ENCODE measurements at regions of chr3 and their contacts with region 1.

Region 1: DNA sequence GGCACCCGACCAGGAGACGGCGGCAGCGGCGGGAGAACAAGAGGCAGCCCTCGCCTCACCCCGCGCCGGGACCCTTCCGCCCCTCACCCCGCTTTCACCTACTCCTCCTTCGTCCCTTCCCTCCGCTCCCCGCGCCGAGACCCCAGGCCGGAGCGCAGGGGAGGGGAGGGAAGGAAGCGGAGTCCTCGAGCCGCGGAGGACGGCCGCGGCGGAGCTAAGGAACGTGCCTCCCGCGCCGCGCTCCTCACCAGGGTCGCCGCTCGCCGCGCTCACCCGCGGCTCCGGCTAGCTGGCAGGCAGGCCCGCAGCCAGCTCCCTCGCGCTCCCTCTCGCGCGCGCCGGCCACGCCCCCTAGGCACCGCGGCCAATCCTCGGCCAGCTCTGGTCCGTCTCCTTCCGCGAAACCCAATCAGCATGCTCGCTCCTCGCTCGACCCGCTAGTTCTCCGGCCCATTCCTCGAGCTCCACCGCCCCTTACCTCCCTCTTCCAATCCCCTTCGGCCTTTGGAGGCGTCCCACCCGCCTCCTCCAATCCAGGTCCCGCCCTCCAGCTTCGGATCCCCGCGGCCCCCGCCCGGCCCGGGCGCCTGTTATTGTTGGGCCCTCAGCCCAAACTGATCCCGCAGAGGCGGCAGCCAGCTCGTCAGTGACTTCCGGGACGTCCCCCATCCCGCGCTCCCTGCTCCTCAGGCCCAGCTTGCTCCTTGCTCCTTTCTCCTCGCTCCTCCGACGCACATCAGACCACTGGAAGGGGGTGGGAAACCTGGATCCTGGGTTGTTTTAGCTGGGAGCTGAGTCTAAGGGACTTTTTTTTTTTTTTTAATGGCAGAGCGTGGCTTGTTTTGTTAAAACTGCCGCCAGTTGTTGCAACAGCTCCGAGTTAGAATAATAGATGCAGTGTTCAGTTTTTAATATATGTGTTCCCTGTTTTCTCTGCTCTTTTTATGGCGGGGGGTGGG is at the start of gene DCBLD2:
- DNase-seq: peak; percentile 99
- H3K4me3 ChIP-seq: peak within 1 kb of the TSS; percentile 77 to 93 (median 92)
- H3K27ac ChIP-seq: peak within 1 kb of the TSS; percentile 88
- H3K4me1 ChIP-seq: peaks cover 41% of the 10 kb centered on the region
- H3K27me3 ChIP-seq: no peaks in the 10 kb centered on the region
- CTCF ChIP-seq: no peak
- POLR2A ChIP-seq: peak; percentile 97
- total RNA-seq, gene DCBLD2: 62.6 and 77.3 TPM in 2 replicates

Region 2: DNA sequence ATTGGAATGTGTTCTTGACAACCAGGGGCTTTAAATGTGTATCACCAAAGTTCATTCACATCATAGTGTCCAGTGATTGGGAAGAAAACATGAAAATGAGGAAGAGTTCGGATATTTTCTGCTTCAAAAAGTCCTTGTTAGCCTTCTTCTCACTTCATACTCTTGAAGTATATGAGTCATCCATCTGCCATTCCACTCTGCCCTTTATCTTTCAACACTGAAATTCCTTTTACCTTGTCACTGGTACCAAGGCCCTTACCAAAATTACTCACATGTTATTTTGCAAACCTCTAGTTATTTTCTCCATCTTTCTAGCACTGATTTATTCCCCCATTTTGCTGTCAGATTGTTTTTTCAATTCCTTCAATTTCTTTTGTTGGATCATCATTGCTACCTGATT is 702.7 kb before region 1 on chr3:
- CTCF ChIA-PET with region 1: no interaction called
- POLR2A ChIA-PET with region 1: no interaction called
- dilution Hi-C with region 1: no loop called
- intact Hi-C with region 1: no loop called
- DNase-seq: no peak
- H3K4me3 ChIP-seq: no peak overlapping the region
- H3K27ac ChIP-seq: no peak overlapping the region
- H3K4me1 ChIP-seq: no peaks in the 10 kb centered on the region
- H3K27me3 ChIP-seq: no peaks in the 10 kb centered on the region
- CTCF ChIP-seq: no peak
- POLR2A ChIP-seq: no peak

Region 3: DNA sequence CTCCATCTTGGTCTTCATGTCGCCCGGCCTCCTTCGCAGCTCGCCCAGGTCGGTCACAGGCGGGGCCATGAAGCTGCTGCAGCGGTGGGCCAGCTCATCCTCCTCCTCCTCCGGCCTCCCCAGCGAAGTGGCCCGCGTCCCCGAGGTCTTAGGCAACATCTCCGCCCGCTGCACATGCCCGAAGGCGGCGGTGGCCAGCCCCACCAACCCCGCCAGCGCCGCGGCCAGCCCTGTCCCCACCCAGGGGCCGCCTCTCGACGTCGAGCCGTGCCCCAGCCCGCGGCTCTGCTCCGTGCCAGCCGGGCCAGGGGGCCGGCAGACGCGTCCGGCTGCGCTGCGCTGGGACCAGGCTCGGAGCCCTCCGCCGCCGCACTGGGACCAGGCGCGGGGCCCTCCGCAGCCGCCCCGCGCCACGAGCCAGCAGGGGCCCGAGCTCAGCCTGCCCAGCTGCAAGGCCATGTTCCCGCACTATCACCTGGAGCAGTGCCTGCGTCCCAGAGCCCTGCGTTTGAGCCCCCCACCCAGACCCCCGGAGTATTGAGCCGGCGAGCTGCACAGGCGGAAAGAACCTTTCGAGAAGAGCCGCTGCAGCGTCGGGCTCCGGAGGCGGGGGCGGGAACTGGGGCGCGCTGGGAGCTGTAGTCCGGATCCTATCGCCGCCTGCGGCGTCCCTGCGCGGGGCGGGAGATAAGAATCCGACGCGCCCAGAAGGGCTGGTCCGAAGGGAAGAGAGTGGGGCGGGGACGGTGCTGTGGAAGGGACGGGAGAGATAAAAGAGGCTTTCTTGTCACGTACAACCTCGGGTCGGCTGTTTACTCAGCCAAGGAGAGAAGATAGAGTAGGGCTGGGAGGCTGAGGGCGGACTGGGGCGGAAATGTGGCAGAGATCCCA is 308.4 kb before region 1 on chr3 and contains the start of gene CPOX:
- CTCF ChIA-PET with region 1: interaction called, 3 read pairs
- POLR2A ChIA-PET with region 1: no interaction called
- dilution Hi-C with region 1: no loop called
- intact Hi-C with region 1: loop called (anchors 10 kb)
- DNase-seq: peak; percentile 89
- H3K4me3 ChIP-seq: peak within 1 kb of the TSS; percentile 52 to 94 (median 76)
- H3K27ac ChIP-seq: peak within 1 kb of the TSS; percentile 49
- H3K4me1 ChIP-seq: peaks cover 10% of the 10 kb centered on the region
- H3K27me3 ChIP-seq: no peaks in the 10 kb centered on the region
- CTCF ChIP-seq: no peak
- POLR2A ChIP-seq: peak; percentile 44
- total RNA-seq, gene CPOX: 19.9 and 24.5 TPM in 2 replicates

Region 4: GRCh38 chr3:98705706-98706105 is 196.0 kb before region 1 on chr3:
- CTCF ChIA-PET with region 1: no interaction called
- POLR2A ChIA-PET with region 1: no interaction called
- dilution Hi-C with region 1: no loop called
- intact Hi-C with region 1: no loop called
- DNase-seq: no peak
- H3K4me3 ChIP-seq: no peak overlapping the region
- H3K27ac ChIP-seq: no peak overlapping the region
- H3K4me1 ChIP-seq: peaks cover 16% of the 10 kb centered on the region
- H3K27me3 ChIP-seq: peaks cover 0 to 6% of the 10 kb centered on the region in 2 experiments
- CTCF ChIP-seq: no peak
- POLR2A ChIP-seq: no peak

Region 5: GRCh38 chr3:98874602-98875249 is 26.9 kb before region 1 on chr3:
- CTCF ChIA-PET with region 1: no interaction called
- POLR2A ChIA-PET with region 1: no interaction called
- dilution Hi-C with region 1: no loop called
- intact Hi-C with region 1: no loop called
- DNase-seq: no peak
- H3K4me3 ChIP-seq: no peak overlapping the region
- H3K27ac ChIP-seq: no peak overlapping the region
- H3K4me1 ChIP-seq: no peaks in the 10 kb centered on the region
- H3K27me3 ChIP-seq: no peaks in the 10 kb centered on the region
- CTCF ChIP-seq: no peak
- POLR2A ChIP-seq: no peak

Region 6: GRCh38 chr3:98884675-98885371 is 16.8 kb before region 1 on chr3:
- CTCF ChIA-PET with region 1: interaction called, 8 read pairs
- POLR2A ChIA-PET with region 1: interaction called, 9 read pairs
- dilution Hi-C with region 1: no loop called
- intact Hi-C with region 1: loop called (anchors 1 kb)
- DNase-seq: peak; percentile 49
- H3K4me3 ChIP-seq: peak overlapping the region in 1 of 3 experiments; percentile 12
- H3K27ac ChIP-seq: peak overlapping the region; percentile 26
- H3K4me1 ChIP-seq: peaks cover 49% of the 10 kb centered on the region
- H3K27me3 ChIP-seq: no peaks in the 10 kb centered on the region
- CTCF ChIP-seq: no peak
- POLR2A ChIP-seq: no peak

Region 7: DNA sequence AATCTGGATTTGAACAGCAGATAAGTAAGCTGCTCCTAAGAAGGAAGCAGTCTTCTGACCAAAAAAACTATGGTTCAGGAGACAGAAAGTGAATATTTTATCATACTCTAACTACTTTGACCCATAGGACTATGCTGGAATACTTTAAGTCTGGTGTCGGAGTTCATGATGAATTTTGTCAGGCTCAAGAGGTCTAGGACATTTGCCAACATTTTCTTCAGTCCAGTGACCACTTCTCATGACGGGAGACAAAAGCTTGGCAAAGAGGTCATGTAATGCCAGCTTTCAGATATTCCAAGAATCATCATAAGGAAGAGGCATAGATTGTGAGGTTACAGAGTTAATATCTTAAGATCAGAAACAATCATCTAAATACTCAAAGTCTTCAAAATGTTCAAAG is 20.3 kb after region 1 on chr3:
- CTCF ChIA-PET with region 1: no interaction called
- POLR2A ChIA-PET with region 1: interaction called, 3 read pairs
- dilution Hi-C with region 1: no loop called
- intact Hi-C with region 1: loop called (anchors 1 kb)
- DNase-seq: no peak
- H3K4me3 ChIP-seq: no peak overlapping the region
- H3K27ac ChIP-seq: peak overlapping the region; percentile 19
- H3K4me1 ChIP-seq: peaks cover 14% of the 10 kb centered on the region
- H3K27me3 ChIP-seq: no peaks in the 10 kb centered on the region
- CTCF ChIP-seq: no peak
- POLR2A ChIP-seq: no peak

Region 8: DNA sequence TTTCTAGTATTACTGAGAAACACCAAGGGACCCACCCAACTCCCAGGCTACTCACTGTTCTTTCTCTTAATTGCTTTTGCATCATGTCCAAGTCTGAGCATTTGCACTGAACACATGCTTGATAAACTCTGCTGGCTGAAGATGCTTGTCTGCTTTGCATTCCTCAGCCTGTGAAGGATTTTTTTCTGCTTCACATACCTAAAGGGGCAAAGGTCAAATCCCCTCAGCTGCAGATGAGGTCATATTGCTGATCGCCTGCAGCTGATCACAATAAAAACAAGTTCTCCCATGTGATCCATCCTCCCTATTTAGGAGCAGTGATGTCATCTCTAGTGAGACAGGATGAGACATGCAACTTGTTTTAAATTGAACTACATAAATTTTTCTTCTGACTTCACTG is 84.4 kb after region 1 on chr3:
- CTCF ChIA-PET with region 1: interaction called, 7 read pairs
- POLR2A ChIA-PET with region 1: interaction called, 8 read pairs
- dilution Hi-C with region 1: no loop called
- intact Hi-C with region 1: loop called (anchors 1 kb)
- DNase-seq: peak; percentile 92
- H3K4me3 ChIP-seq: no peak overlapping the region
- H3K27ac ChIP-seq: peak overlapping the region; percentile 82
- H3K4me1 ChIP-seq: peaks cover 25% of the 10 kb centered on the region
- H3K27me3 ChIP-seq: no peaks in the 10 kb centered on the region
- CTCF ChIP-seq: no peak
- POLR2A ChIP-seq: no peak

Region 9: DNA sequence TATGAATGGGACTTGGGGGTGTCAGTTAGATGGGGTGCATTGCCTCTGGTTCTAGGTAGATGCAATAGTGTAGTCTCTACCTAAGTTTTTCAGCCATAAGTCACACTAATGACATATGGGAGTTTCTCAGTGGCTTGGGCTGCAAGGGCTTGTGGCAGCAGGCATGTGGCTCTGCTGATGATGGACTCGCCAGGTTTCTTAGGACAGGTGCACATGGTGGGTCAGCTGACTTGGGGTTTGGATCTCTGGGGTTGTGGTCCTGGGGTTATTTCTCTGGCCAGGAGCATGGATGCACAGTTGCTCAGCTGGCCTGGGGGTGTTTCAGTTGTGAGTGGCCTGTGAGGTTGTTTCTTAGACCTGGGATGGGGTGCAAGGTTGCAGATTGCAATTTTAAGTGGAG is 119.8 kb after region 1 on chr3:
- CTCF ChIA-PET with region 1: no interaction called
- POLR2A ChIA-PET with region 1: no interaction called
- dilution Hi-C with region 1: no loop called
- intact Hi-C with region 1: no loop called
- DNase-seq: no peak
- H3K4me3 ChIP-seq: no peak overlapping the region
- H3K27ac ChIP-seq: no peak overlapping the region
- H3K4me1 ChIP-seq: no peaks in the 10 kb centered on the region
- H3K27me3 ChIP-seq: no peaks in the 10 kb centered on the region
- CTCF ChIP-seq: no peak
- POLR2A ChIP-seq: no peak